Sciatic nerve (tissue), 2 donors: ENCODE measurements at regions of chr14 and their contacts with region 1.

Region 1: DNA sequence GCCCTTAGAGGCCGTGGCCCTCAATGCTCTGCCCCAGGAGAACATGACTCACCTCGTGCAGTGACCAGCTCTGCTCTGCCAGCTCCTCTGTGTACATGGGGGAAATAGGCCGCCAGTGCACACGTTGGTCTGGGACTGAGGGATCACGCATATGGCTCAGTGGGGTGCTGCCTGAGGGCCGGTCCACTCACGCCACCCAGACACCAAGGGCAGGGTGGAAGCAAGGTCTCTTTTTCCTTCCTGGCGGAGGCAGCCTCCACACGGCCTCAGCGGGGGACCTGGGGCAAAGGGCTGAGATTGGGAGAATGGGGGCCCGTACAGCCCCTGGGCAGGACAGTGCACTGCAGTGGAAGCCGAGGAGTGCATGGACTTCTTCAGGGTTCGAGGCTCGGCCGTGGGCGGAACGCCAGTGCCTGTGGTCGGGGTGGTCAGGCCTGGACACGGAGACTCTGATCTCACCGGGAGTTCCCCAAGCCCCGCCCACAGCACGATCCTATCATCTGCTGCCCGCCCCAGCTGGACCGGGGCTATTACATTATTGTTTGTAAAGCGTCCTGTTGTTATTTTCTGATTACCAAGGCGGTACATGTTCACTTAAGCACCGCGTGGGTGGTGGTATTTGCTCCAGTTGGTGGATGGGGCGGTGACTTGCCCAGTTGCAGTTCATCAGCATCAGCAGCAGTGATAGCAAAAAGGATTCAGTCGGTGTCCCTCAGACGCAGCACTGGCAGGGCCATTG is 38.8 kb upstream of the TDRD9 start:
- DNase-seq: peak; percentile 77
- ATAC-seq: peak; percentile 56

Region 2: GRCh38 chr14:103819503-103820307 is 69.8 kb before region 1 on chr14:
- intact Hi-C with region 1: loop called (anchors 10 kb)
- DNase-seq: peak; percentile 66
- ATAC-seq: peak; percentile 67

Region 3: DNA sequence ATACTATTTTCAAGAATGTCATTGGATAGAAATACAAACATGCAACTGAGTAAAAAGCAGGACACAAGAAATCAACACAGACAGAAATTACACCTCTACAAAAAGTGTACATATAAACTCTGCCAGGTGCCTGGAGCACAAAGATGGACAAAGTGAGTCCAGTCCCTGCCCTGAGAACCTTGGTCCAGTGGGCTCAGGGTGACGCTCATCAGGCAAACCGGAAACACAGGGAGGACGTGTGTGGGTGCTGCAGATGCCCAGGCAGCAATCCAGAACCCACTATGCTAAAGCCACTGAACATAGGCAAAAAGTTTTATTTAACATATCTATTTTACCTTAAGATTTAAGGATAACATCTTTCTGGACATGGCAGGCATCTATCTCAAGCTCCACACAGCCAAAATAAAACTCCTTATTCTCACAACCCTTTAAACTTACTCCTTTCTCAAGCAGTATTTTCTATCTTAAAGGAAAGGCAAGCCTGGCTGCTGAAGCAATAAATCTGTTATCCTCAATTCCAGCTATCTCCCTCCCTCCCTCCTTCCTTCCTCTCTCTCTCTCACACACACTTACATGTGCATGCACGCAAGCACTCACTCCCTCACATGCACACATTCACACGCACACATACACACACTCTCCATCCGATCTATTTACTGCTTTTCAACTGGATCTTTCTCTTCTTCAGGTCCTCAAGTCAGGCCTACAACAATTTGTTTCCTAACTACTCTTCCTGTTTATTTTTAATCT is 52.3 kb before region 1 on chr14:
- intact Hi-C with region 1: loop called (anchors 2 kb)
- DNase-seq: no peak
- ATAC-seq: no peak

Region 4: DNA sequence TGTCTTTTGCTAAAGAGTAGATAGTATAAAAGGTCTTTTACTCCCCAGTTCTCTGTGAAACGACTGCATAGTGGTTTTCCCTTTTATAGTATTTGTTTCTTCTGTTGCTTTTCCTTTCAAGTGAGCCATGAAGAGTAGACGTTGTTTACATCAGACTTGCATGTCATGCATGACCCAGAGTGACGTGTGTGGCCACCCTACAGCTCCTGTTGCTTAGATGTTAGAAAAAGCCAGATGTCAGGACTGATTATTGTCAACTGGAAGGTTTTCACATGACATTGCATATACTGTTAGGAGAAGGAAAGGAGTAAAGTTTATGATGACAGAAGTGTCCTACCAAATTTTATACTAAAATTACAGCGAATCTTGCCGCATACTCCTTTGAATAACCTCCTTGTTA is 54.2 kb after region 1 on chr14:
- intact Hi-C with region 1: no loop called
- DNase-seq: no peak
- ATAC-seq: no peak

Region 5: DNA sequence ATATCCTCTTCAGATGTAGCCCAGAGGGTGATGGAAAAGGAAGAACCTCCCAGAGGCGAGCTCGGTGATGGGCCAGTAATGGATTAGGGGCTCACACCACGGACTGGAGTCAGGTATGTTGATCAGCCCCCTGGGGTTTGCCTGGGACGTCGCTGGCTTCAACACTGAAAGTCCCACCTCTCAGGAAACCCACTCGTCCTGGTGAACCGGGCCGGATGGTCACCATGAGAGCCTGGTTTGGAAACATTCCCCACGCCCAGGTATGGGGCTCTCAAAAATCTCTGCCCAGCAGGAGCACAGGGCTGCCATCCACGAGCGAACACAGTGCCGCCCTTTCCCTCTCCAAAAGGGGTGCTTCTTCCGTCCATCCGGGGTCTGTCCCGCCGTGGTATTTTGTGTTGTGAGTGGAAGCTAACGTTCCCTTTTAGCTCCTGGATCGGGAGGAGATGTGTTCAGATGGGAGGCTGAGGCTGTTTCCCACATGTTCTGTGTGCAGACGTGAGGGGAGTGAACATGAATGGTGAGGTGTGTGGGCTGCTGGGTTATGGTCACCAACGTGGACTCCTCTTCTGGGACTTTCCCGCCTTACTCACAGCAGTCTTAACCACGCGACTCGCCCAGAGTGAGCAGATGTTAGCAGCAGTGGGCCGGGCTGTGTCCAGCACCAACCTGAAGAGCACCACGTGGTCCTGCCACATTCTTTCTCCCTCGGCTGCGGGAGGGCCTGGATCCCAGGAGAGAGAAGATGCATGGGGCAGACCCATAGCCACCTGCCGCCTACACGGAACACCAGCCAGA is 388.1 kb after region 1 on chr14:
- intact Hi-C with region 1: no loop called
- DNase-seq: peak; percentile 50
- ATAC-seq: no peak